ENCODE measurements at regions of chr1 and their contacts with region 1.

Region 1: DNA sequence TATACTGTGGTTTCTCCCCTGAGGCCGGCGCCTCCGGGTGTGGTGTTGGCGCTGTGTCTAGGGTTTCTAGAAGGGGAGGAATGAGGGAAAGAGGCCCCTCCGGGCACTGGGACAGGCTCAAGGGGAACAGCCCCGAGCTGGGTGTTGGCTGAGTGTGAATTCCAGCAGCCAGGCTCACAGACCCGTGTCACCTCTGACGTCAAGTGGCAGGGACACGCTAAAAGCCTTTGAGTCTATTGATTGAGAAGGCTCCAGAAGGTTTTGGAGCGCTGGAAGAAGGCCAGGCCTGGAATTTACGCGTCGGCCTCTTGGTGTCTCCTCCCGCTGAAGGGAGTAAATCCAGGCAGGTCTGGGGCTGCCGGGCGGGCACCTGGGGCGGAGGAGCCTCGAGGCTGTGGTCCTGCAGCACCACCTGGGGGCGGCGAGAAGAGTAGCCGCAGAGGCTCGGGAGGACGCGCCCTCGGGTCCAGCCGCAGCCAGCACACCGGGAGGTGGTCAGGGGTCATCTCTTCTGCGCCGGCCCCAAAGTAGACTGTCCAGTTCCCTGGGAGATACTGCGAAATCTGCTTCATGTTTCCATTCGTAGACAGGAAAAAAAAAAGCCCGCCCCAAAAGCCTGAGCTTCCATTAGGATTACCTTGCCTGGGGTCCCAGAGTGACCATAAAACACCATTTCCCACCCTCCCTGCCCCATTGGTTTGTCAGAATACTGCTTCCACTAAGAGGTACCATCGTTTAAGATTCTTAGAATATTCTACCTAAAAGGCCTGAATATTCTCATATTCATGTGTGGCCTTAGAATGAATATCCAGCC is 61.7 kb downstream of the TLR5 start:
- DNase-seq: peak; percentile 51
- H3K4me3 ChIP-seq: peak overlapping the region; percentile 51
- H3K27ac ChIP-seq: no peak overlapping the region
- H3K27me3 ChIP-seq: peaks cover 38% of the 10 kb centered on the region
- CTCF ChIP-seq: peak; percentile 88

Region 2: GRCh38 chr1:222739465-222739864 is 341.9 kb before region 1 on chr1:
- CTCF ChIA-PET with region 1: interaction called, 14 read pairs
- POLR2A ChIA-PET with region 1: no interaction called
- DNase-seq: no peak
- H3K4me3 ChIP-seq: no peak overlapping the region
- H3K27ac ChIP-seq: no peak overlapping the region
- H3K27me3 ChIP-seq: no peaks in the 10 kb centered on the region
- CTCF ChIP-seq: no peak

Region 3: GRCh38 chr1:222792744-222793143 is 288.6 kb before region 1 on chr1:
- CTCF ChIA-PET with region 1: interaction called, 118 read pairs
- POLR2A ChIA-PET with region 1: no interaction called
- DNase-seq: no peak
- H3K4me3 ChIP-seq: no peak overlapping the region
- H3K27ac ChIP-seq: no peak overlapping the region
- H3K27me3 ChIP-seq: no peaks in the 10 kb centered on the region
- CTCF ChIP-seq: peak; percentile 63

Region 4: DNA sequence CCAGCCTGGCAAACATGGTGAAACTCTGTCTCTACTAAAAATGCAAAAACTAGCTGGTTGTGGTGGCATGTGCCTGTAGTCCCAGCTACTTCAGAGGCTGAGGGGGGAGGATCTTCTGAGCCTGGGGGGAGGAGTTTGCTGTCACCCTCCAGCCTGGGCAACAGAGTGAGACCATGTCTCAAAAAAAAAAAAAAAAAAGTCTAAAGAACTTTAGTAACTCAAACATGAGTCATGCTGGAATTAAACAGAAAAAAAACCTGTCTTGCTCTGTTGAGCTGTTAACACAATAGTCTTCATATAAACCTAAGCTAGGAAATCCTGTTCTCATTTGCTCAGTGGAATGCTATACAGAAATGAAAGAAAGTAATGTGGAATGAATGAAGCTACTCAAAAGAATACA is 283.3 kb before region 1 on chr1:
- CTCF ChIA-PET with region 1: interaction called, 118 read pairs
- POLR2A ChIA-PET with region 1: no interaction called
- DNase-seq: no peak
- H3K4me3 ChIP-seq: no peak overlapping the region
- H3K27ac ChIP-seq: no peak overlapping the region
- H3K27me3 ChIP-seq: no peaks in the 10 kb centered on the region
- CTCF ChIP-seq: no peak

Measured in AG04450 (cell line).